CD4-positive, alpha-beta memory T cell (primary cell): ENCODE measurements at regions of chr15 and their contacts with region 1.

Region 1: GRCh38 chr15:91271565-91272153 is 171.6 kb downstream of the SV2B start:
- DNase-seq: peak; percentile 53 to 56 (median 55)
- H3K4me3 ChIP-seq: no peak overlapping the region
- H3K4me3 Mint-ChIP-seq: peak overlapping the region in 6 of 8 donors; percentile 47 to 74 (median 68)
- H3K27ac ChIP-seq: no peak overlapping the region
- H3K27ac Mint-ChIP-seq: peak overlapping the region in 4 of 7 donors; percentile 16 to 62 (median 38)
- H3K4me1 ChIP-seq: no peaks in the 10 kb centered on the region
- H3K4me1 Mint-ChIP-seq: peaks cover 4 to 6% (median 5%) of the 10 kb centered on the region in 4 donors
- H3K27me3 ChIP-seq: no peaks in the 10 kb centered on the region
- H3K27me3 Mint-ChIP-seq: peaks cover 10 to 14% of the 10 kb centered on the region in 2 donors

Region 2: DNA sequence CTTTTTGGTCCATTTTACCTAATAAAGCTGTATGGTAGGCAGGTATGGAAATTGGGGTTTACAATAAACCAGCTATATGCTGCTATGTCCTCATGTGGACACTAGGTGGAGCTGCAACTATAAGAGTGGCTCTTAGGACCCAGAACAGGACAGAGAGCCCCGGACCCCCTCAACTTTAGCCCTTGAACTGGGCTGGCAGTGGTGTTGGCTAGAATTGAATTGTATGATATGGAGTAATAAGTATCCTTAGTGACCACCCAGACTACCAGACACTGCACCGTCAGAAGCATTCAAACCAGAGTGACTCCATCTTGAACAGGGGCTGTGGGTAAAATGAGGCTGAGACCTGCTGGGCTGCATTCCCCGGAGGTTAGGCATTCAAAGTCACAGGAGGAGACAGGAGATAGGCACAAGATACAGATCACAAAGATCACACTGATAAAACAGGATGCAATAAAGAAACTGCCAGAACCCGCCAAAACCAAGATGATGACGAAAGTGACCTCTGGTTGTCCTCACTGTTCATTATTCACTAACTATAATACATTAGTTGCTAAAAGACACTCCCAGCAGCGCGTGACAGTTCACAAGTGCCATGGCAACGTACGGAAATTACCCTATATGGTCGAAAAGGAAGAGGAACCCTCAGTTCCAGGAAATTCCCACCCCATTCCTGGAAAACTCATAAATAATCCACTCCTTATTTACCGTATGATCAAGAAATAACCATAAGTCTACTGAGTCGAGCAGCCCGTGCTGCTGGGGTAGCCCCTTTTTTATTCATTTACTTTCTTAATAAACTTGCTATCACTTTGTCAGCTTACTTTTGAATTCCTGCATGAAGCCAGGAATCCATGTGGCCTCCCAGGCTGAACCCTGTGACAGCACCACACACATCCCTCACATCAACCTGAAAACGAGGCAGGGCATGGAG is 623.3 kb before region 1 on chr15:
- CTCF ChIA-PET with region 1: no interaction called
- POLR2A ChIA-PET with region 1: no interaction called
- intact Hi-C with region 1: loop called (anchors 5 kb)
- DNase-seq: peak; percentile 59 to 75 (median 67)
- H3K4me3 ChIP-seq: no peak overlapping the region
- H3K4me3 Mint-ChIP-seq: peak overlapping the region in 7 of 8 donors; percentile 53 to 80 (median 73)
- H3K27ac ChIP-seq: no peak overlapping the region
- H3K27ac Mint-ChIP-seq: peak overlapping the region; percentile 28 to 83 (median 75)
- H3K4me1 ChIP-seq: peaks cover 20% of the 10 kb centered on the region
- H3K4me1 Mint-ChIP-seq: peaks cover 14 to 27% (median 21%) of the 10 kb centered on the region in 4 donors
- H3K27me3 ChIP-seq: no peaks in the 10 kb centered on the region
- H3K27me3 Mint-ChIP-seq: peaks cover 0 to 3% of the 10 kb centered on the region in 2 donors

Region 3: DNA sequence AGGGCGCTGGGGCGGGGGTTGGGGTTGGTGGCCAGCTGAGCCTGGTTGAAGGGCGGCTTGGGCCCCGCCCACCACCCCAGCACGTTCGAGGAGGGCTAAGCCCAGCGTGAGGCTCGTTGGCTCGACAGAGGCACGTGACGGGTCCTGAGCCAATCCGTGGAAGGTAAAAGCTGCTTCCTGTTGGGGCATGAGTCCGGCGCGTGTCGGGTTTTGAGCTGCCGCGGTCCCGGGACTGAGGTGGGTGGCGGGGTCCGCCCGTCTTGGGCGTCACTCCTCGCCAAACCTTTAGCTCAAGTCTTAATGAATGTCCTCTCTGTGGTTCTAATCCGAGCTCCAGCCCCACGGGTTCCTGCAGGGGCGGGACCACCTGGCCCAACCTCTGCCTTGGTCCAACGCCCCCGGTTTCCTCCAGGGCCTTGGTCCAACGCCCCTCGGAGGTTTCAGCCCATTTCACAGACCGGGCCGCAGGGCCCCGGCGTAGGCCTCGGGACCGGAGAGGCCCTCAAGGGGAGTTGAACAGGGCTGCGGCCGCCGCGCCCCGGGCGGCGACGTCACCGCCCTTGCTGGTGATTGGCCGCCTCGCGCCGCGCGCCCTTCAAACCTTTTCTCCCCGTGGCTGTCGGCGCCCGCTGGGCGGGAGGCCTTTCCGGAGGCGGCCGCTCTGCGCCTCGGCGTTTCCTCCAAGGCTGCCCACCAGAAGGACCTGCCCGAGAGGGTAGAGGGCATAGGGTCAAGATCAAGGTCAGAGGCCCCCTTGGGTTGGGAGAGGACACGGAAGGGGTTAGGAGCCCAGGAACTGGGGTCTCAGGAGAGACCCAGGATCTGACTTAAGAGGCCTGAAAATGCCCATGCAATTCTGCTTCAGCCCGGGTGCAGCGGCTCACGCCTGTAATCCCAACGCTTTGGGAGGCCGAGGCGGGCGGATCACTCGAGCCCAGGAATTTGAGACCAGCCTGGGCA is 316.7 kb before region 1 on chr15 and contains the start of gene RCCD1:
- CTCF ChIA-PET with region 1: interaction called, 12 read pairs
- POLR2A ChIA-PET with region 1: no interaction called
- intact Hi-C with region 1: loop called (anchors 1 kb)
- DNase-seq: peak; percentile 84 to 91 (median 85)
- H3K4me3 ChIP-seq: peak within 1 kb of the TSS; percentile 90 to 98
- H3K4me3 Mint-ChIP-seq: peak within 1 kb of the TSS; percentile 85 to 92 (median 88)
- H3K27ac ChIP-seq: peak within 1 kb of the TSS; percentile 94
- H3K27ac Mint-ChIP-seq: peak within 1 kb of the TSS; percentile 82 to 98 (median 95)
- H3K4me1 ChIP-seq: peaks cover 15% of the 10 kb centered on the region
- H3K4me1 Mint-ChIP-seq: peaks cover 6 to 26% (median 18%) of the 10 kb centered on the region in 4 donors
- H3K27me3 ChIP-seq: no peaks in the 10 kb centered on the region
- H3K27me3 Mint-ChIP-seq: no peaks in the 10 kb centered on the region
- total RNA-seq, gene RCCD1: 14.0 to 15.6 TPM

Region 4: DNA sequence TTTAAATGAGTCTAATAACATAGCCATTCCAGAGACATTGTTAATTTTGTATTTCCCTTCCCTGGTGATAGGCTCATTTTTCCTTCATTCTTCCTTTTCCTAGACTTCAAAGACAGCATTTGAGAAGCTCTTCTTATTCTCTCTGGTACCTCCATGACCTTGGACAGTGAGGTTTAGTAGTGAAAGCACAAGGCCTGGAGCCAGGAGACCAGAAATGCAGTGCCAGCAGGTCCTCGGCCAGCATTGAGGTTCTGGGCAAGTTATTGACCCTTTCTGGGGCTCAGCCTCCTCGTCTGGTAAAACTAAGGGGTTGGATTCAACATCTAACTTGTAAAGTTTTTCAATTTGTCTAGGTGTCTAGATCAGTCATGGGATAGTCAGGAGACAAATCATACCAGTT is 24.7 kb before region 1 on chr15:
- CTCF ChIA-PET with region 1: interaction called, 18 read pairs
- POLR2A ChIA-PET with region 1: no interaction called
- intact Hi-C with region 1: no loop called
- DNase-seq: no peak
- H3K4me3 ChIP-seq: no peak overlapping the region
- H3K4me3 Mint-ChIP-seq: no peak overlapping the region
- H3K27ac ChIP-seq: no peak overlapping the region
- H3K27ac Mint-ChIP-seq: no peak overlapping the region
- H3K4me1 ChIP-seq: no peaks in the 10 kb centered on the region
- H3K4me1 Mint-ChIP-seq: no peaks in the 10 kb centered on the region
- H3K27me3 ChIP-seq: no peaks in the 10 kb centered on the region
- H3K27me3 Mint-ChIP-seq: peaks cover 9 to 28% of the 10 kb centered on the region in 2 donors

Region 5: DNA sequence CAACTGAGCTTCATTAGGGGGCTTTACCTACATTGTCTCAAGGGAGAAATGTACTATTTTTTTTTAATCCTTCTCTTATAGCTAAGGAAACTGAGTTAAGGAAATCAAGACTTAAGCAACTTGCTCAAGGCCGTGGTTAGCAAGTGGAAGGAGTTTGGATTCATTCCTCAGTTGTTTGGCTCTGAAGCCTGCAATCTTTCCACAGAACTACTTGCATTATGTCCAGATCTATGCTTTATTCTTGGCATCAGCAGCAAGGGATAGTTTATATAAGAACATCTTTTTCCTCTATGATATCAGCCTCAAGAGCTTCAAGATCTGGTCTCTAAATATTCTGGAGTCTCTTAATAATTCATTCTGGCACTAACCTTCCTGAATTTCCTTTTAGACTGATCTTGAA is 10.8 kb after region 1 on chr15:
- CTCF ChIA-PET with region 1: interaction called, 11 read pairs
- POLR2A ChIA-PET with region 1: no interaction called
- intact Hi-C with region 1: no loop called
- DNase-seq: no peak
- H3K4me3 ChIP-seq: no peak overlapping the region
- H3K4me3 Mint-ChIP-seq: no peak overlapping the region
- H3K27ac ChIP-seq: no peak overlapping the region
- H3K27ac Mint-ChIP-seq: no peak overlapping the region
- H3K4me1 ChIP-seq: no peaks in the 10 kb centered on the region
- H3K4me1 Mint-ChIP-seq: no peaks in the 10 kb centered on the region
- H3K27me3 ChIP-seq: peaks cover 4% of the 10 kb centered on the region
- H3K27me3 Mint-ChIP-seq: peaks cover 7% of the 10 kb centered on the region in 2 donors

Region 6: GRCh38 chr15:91522663-91523332 is 251.1 kb after region 1 on chr15:
- CTCF ChIA-PET with region 1: interaction called, 5 read pairs
- POLR2A ChIA-PET with region 1: no interaction called
- intact Hi-C with region 1: loop called (anchors 1 kb)
- DNase-seq: peak in 4 of 5 donors; percentile 37 to 52 (median 40)
- H3K4me3 ChIP-seq: no peak overlapping the region
- H3K4me3 Mint-ChIP-seq: peak overlapping the region in 3 of 8 donors; percentile 7 to 29 (median 12)
- H3K27ac ChIP-seq: no peak overlapping the region
- H3K27ac Mint-ChIP-seq: peak overlapping the region in 4 of 7 donors; percentile 23 to 68 (median 36)
- H3K4me1 ChIP-seq: peaks cover 25% of the 10 kb centered on the region
- H3K4me1 Mint-ChIP-seq: peaks cover 19 to 37% (median 24%) of the 10 kb centered on the region in 4 donors
- H3K27me3 ChIP-seq: no peaks in the 10 kb centered on the region
- H3K27me3 Mint-ChIP-seq: peaks cover 1 to 6% of the 10 kb centered on the region in 2 donors